ENCODE measurements at regions of chr5 and their contacts with region 1.

Region 1: DNA sequence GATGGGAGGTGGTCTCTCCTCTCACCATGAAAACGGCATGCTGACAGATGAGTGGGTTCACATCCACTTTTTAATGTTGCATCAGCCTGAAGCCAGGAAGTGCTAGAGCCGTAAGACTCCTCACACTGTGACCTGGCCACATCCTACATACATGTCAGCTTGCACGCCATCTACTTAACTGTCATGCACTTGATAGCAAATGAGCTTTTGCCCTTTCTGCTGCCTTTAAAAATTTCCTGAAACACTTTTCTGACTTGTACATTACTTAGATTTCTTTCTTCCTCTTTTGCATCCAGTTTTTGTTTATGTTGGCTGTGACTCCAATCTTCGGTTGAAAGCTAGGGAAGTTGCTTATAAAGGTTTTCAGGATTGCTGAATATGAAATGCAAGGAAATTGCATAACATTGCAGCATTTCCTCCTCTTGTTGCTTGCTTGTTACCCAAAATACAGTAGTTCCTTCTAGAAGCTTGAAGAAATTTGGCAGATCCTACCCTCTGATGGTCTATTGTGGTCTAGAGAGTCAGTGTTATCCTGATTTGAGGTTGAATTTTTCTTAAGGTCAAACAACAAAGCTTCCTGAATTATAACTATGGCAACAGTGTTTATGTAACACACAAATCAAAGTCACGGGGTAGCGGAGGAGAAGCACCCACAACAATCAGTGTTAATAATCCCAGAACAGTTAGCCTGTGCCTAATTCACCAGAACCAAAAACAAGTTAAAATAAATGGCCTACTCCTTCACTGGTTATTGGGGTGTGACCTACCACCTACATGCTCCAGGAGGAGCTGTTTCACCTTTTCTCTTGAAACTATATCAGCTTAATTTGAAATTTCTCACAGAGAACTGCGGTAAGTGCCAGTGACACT is 232.5 kb downstream of the ARHGAP26 start:
- DNase-seq: peak; percentile 72 to 88 (median 75)
- H3K4me3 ChIP-seq: no peak overlapping the region
- H3K4me3 Mint-ChIP-seq: peak overlapping the region; percentile 40 to 79 (median 61)
- H3K27ac ChIP-seq: peak overlapping the region; percentile 77
- H3K27ac Mint-ChIP-seq: peak overlapping the region; percentile 87 to 98 (median 96)
- H3K4me1 ChIP-seq: peaks cover 54% of the 10 kb centered on the region
- H3K4me1 Mint-ChIP-seq: peaks cover 46 to 76% (median 57%) of the 10 kb centered on the region in 4 donors
- H3K27me3 ChIP-seq: no peaks in the 10 kb centered on the region
- H3K27me3 Mint-ChIP-seq: no peaks in the 10 kb centered on the region

Region 2: DNA sequence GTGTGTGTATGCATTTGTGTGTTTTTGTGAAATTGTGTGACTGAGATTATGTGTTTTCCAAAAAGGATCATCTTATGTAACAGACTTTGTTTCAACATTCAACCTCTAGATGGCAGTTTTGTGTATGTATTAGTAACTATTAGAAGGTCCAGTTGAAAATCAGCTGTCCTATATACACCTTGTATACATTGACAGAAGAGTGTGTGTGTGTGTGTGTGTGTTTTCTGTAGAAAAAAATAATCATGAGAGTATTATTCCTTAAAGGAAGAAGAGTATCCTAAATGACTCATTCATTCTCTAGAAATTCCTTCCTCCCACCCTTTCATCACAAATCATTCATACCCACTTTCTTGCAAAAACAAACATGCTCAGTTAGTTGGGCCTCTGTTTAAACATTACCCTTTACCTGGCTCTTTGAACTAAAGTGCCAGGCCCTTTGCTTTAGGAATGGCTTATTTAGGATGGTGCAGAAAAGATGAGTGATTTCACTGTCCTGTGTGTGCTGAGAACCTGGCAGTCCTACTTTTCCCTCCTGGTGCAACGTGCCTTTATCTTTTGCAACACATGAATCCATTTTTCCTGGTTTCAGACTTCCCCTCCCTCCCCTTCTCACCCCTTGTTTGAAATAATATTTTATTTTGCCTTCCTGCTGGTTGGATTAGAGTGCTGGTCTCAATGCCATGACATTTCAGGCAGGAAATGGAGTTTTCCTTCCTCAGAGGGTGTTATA is 80.3 kb before region 1 on chr5:
- CTCF ChIA-PET with region 1: interaction called, 39 read pairs
- POLR2A ChIA-PET with region 1: interaction called, 20 read pairs
- intact Hi-C with region 1: loop called (anchors 2 kb)
- DNase-seq: peak in 4 of 5 donors; percentile 9 to 32 (median 20)
- H3K4me3 ChIP-seq: no peak overlapping the region
- H3K4me3 Mint-ChIP-seq: no peak overlapping the region
- H3K27ac ChIP-seq: no peak overlapping the region
- H3K27ac Mint-ChIP-seq: peak overlapping the region in 4 of 7 donors; percentile 19 to 60 (median 27)
- H3K4me1 ChIP-seq: peaks cover 10% of the 10 kb centered on the region
- H3K4me1 Mint-ChIP-seq: peaks cover 19 to 34% (median 28%) of the 10 kb centered on the region in 4 donors
- H3K27me3 ChIP-seq: no peaks in the 10 kb centered on the region
- H3K27me3 Mint-ChIP-seq: no peaks in the 10 kb centered on the region

Region 3: GRCh38 chr5:142984011-142984410 is 18.7 kb before region 1 on chr5:
- CTCF ChIA-PET with region 1: interaction called, 15 read pairs
- POLR2A ChIA-PET with region 1: interaction called, 112 read pairs
- intact Hi-C with region 1: no loop called
- DNase-seq: no peak
- H3K4me3 ChIP-seq: no peak overlapping the region
- H3K4me3 Mint-ChIP-seq: peak overlapping the region in 1 of 8 donors; percentile 29
- H3K27ac ChIP-seq: no peak overlapping the region
- H3K27ac Mint-ChIP-seq: peak overlapping the region; percentile 7 to 85 (median 57)
- H3K4me1 ChIP-seq: peaks cover 37% of the 10 kb centered on the region
- H3K4me1 Mint-ChIP-seq: peaks cover 31 to 63% (median 48%) of the 10 kb centered on the region in 4 donors
- H3K27me3 ChIP-seq: no peaks in the 10 kb centered on the region
- H3K27me3 Mint-ChIP-seq: no peaks in the 10 kb centered on the region

Region 4: GRCh38 chr5:143142596-143143435 is 140.1 kb after region 1 on chr5:
- CTCF ChIA-PET with region 1: no interaction called
- POLR2A ChIA-PET with region 1: no interaction called
- intact Hi-C with region 1: no loop called
- DNase-seq: no peak
- H3K4me3 ChIP-seq: no peak overlapping the region
- H3K4me3 Mint-ChIP-seq: no peak overlapping the region
- H3K27ac ChIP-seq: no peak overlapping the region
- H3K27ac Mint-ChIP-seq: peak overlapping the region in 1 of 7 donors; percentile 17
- H3K4me1 ChIP-seq: no peaks in the 10 kb centered on the region
- H3K4me1 Mint-ChIP-seq: peaks cover 0 to 8% (median 6%) of the 10 kb centered on the region in 4 donors
- H3K27me3 ChIP-seq: no peaks in the 10 kb centered on the region
- H3K27me3 Mint-ChIP-seq: no peaks in the 10 kb centered on the region

Region 5: DNA sequence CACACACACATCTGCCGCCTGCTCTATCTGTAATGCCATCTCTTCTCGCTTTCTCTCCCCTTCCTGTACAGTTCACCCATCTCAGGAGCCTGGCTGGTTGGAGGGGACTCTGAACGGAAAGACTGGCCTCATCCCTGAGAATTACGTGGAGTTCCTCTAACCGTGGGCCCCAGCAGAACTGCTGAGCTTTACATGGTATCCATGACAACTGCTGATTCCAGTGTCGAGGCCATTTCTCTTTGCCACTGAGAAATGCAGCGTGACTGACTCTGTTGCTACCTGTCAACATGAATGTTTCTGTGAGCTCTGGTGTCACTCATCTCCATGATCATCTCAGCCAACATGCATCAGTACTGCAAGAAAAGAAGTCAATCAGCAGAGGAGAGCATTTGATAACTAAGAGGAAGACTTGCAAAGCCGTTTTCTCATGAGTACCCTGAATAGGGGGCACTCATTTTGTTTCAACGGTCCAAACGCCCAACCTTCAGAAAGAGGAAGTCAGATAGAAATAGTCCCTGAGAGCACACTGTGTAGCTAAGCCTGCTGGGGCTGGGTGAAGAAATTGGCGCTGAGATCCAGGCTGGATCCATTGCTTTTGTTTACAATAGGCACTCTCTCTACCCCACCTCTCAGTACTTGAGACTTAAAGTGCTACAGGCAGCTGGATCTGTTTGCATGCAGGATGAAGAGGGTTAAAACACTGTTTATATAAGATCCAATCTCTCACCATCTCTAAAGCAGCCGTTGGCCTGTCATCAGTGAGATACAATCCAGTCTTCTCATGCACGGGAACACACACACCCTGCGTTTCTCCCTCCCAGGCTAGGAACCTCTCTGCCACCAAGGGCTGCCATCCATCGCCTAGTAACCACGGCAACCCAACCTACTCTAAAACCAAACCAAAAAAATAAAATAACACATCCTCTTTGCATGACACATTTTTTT is 219.9 kb after region 1 on chr5:
- CTCF ChIA-PET with region 1: no interaction called
- POLR2A ChIA-PET with region 1: interaction called, 17 read pairs
- intact Hi-C with region 1: loop called (anchors 5 kb)
- DNase-seq: peak; percentile 81 to 95 (median 85)
- H3K4me3 ChIP-seq: peak overlapping the region in 1 of 2 donors; percentile 42
- H3K4me3 Mint-ChIP-seq: peak overlapping the region; percentile 41 to 85 (median 74)
- H3K27ac ChIP-seq: peak overlapping the region; percentile 91
- H3K27ac Mint-ChIP-seq: peak overlapping the region; percentile 95 to 100 (median 98)
- H3K4me1 ChIP-seq: peaks cover 56% of the 10 kb centered on the region
- H3K4me1 Mint-ChIP-seq: peaks cover 34 to 65% (median 50%) of the 10 kb centered on the region in 4 donors
- H3K27me3 ChIP-seq: no peaks in the 10 kb centered on the region
- H3K27me3 Mint-ChIP-seq: peaks cover 0 to 1% of the 10 kb centered on the region in 2 donors

Region 6: DNA sequence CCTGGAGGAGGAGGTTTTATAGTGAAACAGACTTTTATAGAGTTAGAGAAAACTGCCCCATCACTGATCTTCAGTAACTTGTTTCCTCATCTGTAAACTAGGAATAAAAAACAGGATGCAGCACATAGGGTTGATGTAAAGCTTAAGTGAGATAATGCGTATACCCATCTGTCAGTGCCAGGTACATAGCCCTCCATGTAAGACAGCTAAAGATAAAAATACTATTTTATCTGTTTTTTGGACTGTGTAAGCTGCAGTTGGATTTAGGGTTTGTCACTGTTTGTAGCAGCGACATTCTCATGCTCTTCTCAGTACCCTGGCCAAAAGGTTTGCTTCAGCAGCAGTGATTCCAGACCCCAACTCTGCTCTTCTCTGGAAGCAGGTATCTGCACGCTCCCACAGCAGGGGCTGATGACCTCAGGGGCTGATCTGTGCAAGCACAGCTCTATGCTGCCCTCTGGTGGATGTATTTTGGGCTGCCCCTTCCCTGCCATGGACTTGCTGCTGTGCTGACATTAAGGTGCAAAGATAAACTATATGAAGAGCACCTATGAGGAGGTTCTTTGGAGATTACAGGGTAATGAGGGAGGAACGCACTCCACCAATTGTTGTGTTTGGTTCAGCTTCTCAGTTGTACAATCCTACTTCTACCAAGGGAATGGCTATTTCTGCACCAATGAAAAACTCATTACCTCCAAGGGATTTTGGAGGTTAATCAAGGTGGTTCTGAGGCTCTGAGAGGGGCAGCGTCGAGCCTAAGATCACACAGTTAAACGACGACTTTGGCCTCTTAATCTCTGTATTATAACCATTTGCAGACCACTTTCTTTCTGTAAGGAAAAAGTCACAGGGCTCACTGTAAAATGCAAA is 822.4 kb after region 1 on chr5:
- CTCF ChIA-PET with region 1: interaction called, 36 read pairs
- POLR2A ChIA-PET with region 1: interaction called, 10 read pairs
- intact Hi-C with region 1: loop called (anchors 1 kb)
- DNase-seq: peak; percentile 72 to 80 (median 75)
- H3K4me3 ChIP-seq: no peak overlapping the region
- H3K4me3 Mint-ChIP-seq: no peak overlapping the region
- H3K27ac ChIP-seq: no peak overlapping the region
- H3K27ac Mint-ChIP-seq: no peak overlapping the region
- H3K4me1 ChIP-seq: peaks cover 27% of the 10 kb centered on the region
- H3K4me1 Mint-ChIP-seq: peaks cover 16 to 19% (median 17%) of the 10 kb centered on the region in 4 donors
- H3K27me3 ChIP-seq: no peaks in the 10 kb centered on the region
- H3K27me3 Mint-ChIP-seq: peaks cover 0 to 2% of the 10 kb centered on the region in 2 donors

Region 7: DNA sequence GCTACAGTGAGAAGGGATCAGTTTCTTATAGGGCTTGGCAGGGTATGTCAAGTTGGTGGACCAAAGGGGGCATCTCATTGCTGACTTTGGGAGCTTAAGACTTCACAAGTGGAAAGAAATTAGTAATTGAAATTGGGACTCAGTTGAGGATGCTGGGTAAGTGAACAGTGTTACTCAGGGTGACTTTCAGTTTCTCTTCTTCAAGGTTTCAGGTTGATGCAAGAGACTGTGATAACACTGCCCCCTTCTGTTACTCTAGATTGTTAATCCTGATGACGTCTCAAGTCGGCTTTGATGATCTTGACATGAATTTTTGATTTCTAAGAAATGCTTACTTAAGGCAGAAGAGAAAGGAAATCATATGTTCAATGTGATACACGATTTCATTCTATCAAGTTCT is 1189.3 kb after region 1 on chr5:
- CTCF ChIA-PET with region 1: interaction called, 21 read pairs
- POLR2A ChIA-PET with region 1: interaction called, 20 read pairs
- intact Hi-C with region 1: loop called (anchors 2 kb)
- DNase-seq: peak; percentile 73 to 86 (median 82)
- H3K4me3 ChIP-seq: peak overlapping the region in 1 of 2 donors; percentile 32
- H3K4me3 Mint-ChIP-seq: no peak overlapping the region
- H3K27ac ChIP-seq: peak overlapping the region; percentile 78
- H3K27ac Mint-ChIP-seq: no peak overlapping the region
- H3K4me1 ChIP-seq: peaks cover 55% of the 10 kb centered on the region
- H3K4me1 Mint-ChIP-seq: peaks cover 0 to 40% (median 35%) of the 10 kb centered on the region in 4 donors
- H3K27me3 ChIP-seq: no peaks in the 10 kb centered on the region
- H3K27me3 Mint-ChIP-seq: no peaks in the 10 kb centered on the region

Measured in CD4-positive, alpha-beta memory T cell (primary cell).